Activated T-helper 2 cell treated with anti-CD3 and anti-CD28 coated beads, Interferon-gamma antibody, Interleukin-2, Interleukin-4, amounts not matched to agents 10 μg/mL and 5 μg/mL and 100 μg/mL, durations not matched to agents 14 hours and 24 hours and 36 hours (primary cell): ENCODE measurements at regions of chr15 and their contacts with region 1.

Region 1: DNA sequence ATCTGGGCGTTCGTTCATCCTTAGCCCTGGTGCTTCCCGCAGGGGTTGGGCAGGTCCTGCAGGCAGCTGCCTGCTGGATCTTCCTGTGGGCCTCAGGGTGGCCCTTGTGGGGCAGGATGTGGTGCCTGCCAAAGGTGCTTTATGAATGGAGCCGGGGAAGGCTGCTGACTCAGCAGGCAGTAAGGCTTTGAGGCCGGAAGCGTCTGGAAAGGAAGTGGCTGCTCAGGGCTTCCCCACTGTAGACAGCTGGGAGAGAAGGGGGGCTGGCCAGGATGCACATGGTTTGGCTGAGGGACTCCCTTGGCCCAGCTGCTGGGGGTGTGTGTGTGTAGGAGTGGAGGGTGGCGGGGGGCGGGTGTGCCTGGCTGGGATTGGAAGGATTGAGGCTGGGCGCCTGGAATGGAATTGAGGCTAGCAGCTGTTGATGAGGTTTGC is 12.9 kb downstream of the CD276 start:
- DNase-seq: peak; percentile 79
- H3K4me3 Mint-ChIP-seq: peak overlapping the region; percentile 26
- H3K27ac Mint-ChIP-seq: peak overlapping the region; percentile 21
- H3K4me1 Mint-ChIP-seq: peaks cover 39% of the 10 kb centered on the region
- H3K27me3 Mint-ChIP-seq: peaks cover 43% of the 10 kb centered on the region

Region 2: DNA sequence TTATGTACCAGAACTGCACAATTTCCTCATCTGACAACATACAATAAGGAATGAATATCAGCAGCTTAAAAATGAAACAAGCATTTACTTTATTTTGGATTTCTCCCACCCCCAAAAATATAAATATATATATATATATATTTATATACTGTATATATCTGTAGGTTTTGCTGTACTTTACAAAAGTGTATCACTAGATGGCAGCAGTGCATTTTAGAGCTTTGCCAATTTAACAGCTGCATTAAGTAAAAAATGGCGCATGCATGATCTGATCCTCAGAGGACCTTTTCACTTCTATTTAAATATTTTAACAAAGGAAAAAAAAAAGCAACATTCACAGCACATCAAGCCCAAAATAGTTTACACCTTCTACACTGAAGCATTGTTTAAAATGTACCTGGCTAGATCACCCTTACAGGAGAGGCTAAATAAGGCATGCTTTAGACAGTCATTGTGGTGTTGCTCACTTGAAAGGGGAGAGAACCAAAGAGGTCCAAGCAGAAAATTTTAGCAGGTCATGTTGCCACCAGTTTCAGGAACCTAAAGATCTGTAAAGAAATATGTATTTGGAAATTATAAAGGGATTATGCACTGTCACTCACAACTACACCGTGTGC is 136.4 kb before region 1 on chr15:
- intact Hi-C with region 1: loop called (anchors 1 kb)
- DNase-seq: no peak
- H3K4me3 Mint-ChIP-seq: no peak overlapping the region
- H3K27ac Mint-ChIP-seq: no peak overlapping the region
- H3K4me1 Mint-ChIP-seq: peaks cover 8% of the 10 kb centered on the region
- H3K27me3 Mint-ChIP-seq: no peaks in the 10 kb centered on the region

Region 3: GRCh38 chr15:73650416-73651126 is 46.5 kb before region 1 on chr15:
- intact Hi-C with region 1: loop called (anchors 1 kb)
- DNase-seq: no peak
- H3K4me3 Mint-ChIP-seq: no peak overlapping the region
- H3K27ac Mint-ChIP-seq: peak overlapping the region; percentile 55
- H3K4me1 Mint-ChIP-seq: peaks cover 17% of the 10 kb centered on the region
- H3K27me3 Mint-ChIP-seq: peaks cover 8% of the 10 kb centered on the region

Region 4: DNA sequence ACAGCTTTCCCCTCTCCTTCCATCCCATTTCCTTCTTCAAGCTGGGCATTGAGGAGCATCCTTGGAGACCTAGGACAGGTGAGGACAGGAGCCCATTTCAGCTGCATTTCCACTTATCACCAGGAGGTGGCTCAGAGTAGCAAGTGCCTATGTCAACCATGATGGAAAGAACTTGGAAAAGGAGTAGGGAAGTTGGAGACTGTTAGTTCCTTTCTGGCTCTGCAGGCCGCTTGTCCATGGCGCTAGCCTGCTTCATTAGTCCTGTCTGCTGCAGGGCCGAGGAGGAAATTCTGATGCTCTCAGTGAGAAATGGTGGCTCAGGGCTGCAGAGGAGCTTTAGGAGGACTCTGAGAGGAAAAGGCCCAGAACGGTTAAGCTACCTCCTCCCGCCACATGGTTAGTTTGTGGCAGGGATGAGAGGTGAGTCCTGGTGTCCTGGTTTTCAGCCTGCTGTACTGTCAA is 19.9 kb before region 1 on chr15:
- intact Hi-C with region 1: loop called (anchors 1 kb)
- DNase-seq: peak; percentile 36
- H3K4me3 Mint-ChIP-seq: no peak overlapping the region
- H3K27ac Mint-ChIP-seq: no peak overlapping the region
- H3K4me1 Mint-ChIP-seq: peaks cover 15% of the 10 kb centered on the region
- H3K27me3 Mint-ChIP-seq: peaks cover 19% of the 10 kb centered on the region